Posterior vena cava (tissue), 2 donors: ENCODE measurements at regions of chr1 and their contacts with region 1.

Region 1: GRCh38 chr1:46527474-46528296 is 23.8 kb downstream of the KNCN start:
- DNase-seq: peak; percentile 94

Region 2: GRCh38 chr1:46404482-46405196 is 123.0 kb before region 1 on chr1:
- intact Hi-C with region 1: loop called in 1 of 2 experiments (anchors 1 kb)
- DNase-seq: no peak

Region 3: GRCh38 chr1:46446646-46447498 is 80.8 kb before region 1 on chr1:
- intact Hi-C with region 1: loop called (anchors 1 to 5 kb)
- DNase-seq: peak; percentile 94

Region 4: GRCh38 chr1:46477153-46477929 is 50.3 kb before region 1 on chr1:
- intact Hi-C with region 1: loop called in 1 of 2 experiments (anchors 5 kb)
- DNase-seq: peak; percentile 91

Region 5: DNA sequence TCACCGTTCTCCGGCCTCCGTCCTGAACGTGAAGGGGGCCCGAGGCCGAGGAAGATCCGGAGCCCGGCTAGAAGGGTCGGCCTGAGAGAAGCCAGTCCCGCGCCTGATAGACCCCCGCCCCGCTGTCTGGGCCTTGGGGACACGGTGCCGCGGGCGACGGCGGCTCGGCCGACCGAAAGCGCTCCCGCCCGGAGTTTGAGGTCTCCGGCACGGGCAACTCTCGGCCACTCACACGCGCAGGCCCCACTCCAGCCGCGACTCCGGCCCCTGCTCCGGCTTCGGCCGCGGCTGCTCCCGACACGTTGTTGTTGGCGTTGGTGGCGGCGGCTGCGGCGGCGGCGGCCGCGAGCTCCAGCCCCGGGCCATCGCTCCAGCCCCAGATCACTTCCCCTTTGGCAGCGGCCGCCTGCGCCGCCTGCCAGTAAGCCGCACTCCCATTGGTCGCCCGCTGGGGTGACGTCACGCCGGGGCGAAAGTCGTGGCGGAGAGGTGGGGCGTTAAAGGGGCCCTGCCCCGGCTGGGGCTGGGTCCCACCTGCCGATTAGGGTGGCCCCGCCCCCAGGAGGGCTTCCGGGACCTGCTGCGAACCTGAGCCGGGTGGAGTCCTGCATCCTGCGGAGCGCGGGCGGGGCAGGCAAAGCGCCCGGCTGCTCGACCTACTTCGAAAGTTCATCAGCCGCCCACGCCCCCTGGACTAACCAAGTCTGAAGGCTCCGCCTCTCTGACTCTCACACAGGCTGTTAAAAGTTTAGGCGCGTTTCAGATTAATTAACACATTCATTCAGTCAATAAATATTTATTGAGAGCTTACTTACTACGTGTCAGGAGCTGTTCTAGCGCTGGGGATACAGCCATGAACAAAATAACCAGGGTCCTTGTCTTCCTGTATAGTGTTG is 191.3 kb after region 1 on chr1 and contains the start of gene EFCAB14:
- intact Hi-C with region 1: loop called (anchors 5 kb)
- DNase-seq: peak; percentile 99
- total RNA-seq, gene EFCAB14: 86.5 to 97.0 TPM

Region 6: GRCh38 chr1:46724991-46725735 is 197.5 kb after region 1 on chr1:
- intact Hi-C with region 1: loop called in 1 of 2 experiments (anchors 5 kb)
- DNase-seq: peak; percentile 88

Region 7: GRCh38 chr1:47225430-47226100 is 697.9 kb after region 1 on chr1:
- intact Hi-C with region 1: no loop called
- DNase-seq: no peak